PC-9 (cell line): ENCODE measurements at regions of chr7 and their contacts with region 1.

Region 1: GRCh38 chr7:5892498-5892897 is 6.0 kb upstream of the CCZ1 start:
- DNase-seq: no peak
- H3K4me3 ChIP-seq: no peak overlapping the region
- H3K27ac ChIP-seq: no peak overlapping the region
- H3K4me1 ChIP-seq: no peaks in the 10 kb centered on the region; the same call in 1 of the 2 replicates
- H3K27me3 ChIP-seq: no peaks in the 10 kb centered on the region
- CTCF ChIP-seq: no peak

Region 2: DNA sequence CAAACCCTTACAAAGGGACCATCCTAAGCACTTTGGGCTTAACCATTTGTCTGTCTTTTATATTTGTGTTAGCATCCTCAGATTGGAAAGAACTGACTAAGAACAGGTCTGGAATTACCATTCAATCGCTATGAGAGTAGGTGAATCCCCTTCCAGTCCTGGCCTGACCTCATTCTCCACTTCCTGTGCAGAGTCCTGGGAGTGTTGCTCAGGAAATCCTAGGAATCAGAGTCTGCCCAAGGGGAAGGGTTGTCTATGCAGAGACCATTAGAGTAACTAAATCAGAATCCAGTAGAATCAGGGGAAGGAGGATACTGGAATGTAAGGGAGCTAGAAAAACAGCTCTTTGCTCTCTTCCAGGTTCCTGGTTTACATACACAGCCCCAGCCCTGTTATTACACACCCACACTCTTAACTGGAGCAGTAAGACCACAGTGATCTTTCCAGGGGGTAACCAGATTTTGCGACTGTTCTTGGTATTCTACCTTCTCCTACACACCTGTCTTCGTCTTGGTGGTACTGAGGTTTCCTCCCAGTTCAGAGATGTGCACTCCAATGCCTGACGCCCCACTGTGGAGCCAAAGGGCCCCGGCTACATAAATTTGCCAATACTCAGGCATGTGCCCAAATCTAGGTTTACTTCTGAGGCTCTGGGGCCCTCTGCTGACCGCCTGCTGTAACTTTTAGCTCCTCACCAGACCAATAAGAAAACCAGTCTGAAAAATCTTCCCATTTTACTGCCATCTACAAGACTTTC is 214.8 kb before region 1 on chr7:
- CTCF ChIA-PET with region 1: no interaction called
- POLR2A ChIA-PET with region 1: no interaction called
- intact Hi-C with region 1: no loop called
- DNase-seq: peak; percentile 62 to 69
- H3K4me3 ChIP-seq: no peak overlapping the region
- H3K27ac ChIP-seq: no peak overlapping the region
- H3K4me1 ChIP-seq: no peaks in the 10 kb centered on the region
- H3K27me3 ChIP-seq: no peaks in the 10 kb centered on the region
- CTCF ChIP-seq: peak; percentile 87

Region 3: GRCh38 chr7:5822742-5823503 is 69.6 kb before region 1 on chr7:
- CTCF ChIA-PET with region 1: interaction called, 11 read pairs
- POLR2A ChIA-PET with region 1: no interaction called
- intact Hi-C with region 1: no loop called
- DNase-seq: peak; percentile 91 to 98
- H3K4me3 ChIP-seq: peak overlapping the region; percentile 87
- H3K27ac ChIP-seq: peak overlapping the region; percentile 78
- H3K4me1 ChIP-seq: peaks cover 18% of the 10 kb centered on the region
- H3K27me3 ChIP-seq: no peaks in the 10 kb centered on the region
- CTCF ChIP-seq: no peak